ENCODE measurements at regions of chr14 and their contacts with region 1.

Region 1: DNA sequence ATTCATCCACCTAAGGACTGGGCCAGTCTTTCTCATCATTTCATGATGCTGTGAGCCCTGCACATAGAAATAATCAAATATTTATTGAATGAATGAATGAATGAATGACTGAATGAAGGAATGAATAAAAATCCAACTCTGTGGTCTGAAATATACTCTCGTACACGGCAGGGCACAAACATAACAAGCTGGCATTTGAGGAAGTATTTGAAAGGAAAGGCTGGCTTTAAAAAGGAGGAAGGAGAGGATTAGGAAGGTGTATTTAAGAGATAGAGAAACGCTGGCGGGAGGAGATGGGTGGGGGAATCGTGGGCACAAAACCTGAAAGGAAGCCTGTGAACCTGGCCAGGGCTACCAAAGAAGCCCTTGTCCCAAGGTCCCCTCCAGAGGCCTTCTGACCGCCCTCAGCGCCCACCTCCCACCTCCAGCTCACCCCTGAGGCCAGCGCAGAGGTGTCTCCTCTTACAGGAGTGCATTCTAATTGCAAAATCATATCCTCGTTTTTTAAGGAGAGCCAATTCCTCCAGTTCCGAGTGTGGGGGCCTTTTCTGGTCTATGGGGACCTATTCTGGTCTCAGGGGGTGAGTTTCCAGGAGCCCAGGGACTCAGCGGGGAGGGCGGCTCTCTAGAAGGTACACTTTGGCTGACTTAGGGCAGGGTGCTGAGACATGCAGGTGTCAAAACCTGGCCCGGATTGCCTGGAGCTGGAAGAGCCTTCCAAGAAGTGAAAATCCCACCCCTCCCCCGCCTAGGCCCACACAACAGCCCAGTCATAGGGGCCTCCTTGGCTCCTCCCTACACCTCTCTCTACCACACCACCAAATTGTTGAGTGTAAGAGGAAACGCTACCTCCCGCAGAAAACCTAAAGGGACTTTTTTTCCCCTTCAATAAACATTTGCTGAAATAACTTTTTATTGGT is 8.7 kb upstream of the JDP2 start:
- DNase-seq: no peak
- H3K4me3 ChIP-seq: no peak overlapping the region
- H3K27ac ChIP-seq: peak overlapping the region in 1 of 2 donors; percentile 9
- H3K4me1 ChIP-seq: no peaks in the 10 kb centered on the region
- H3K27me3 ChIP-seq: no peaks in the 10 kb centered on the region
- CTCF ChIP-seq: no peak
- POLR2A ChIP-seq: no peak

Region 2: GRCh38 chr14:73610687-73611086 is 1808.4 kb before region 1 on chr14:
- intact Hi-C with region 1: no loop called
- DNase-seq: no peak
- H3K4me3 ChIP-seq: no peak overlapping the region
- H3K27ac ChIP-seq: no peak overlapping the region
- H3K4me1 ChIP-seq: no peaks in the 10 kb centered on the region
- H3K27me3 ChIP-seq: no peaks in the 10 kb centered on the region
- CTCF ChIP-seq: no peak
- POLR2A ChIP-seq: no peak

Region 3: GRCh38 chr14:75366963-75367362 is 52.1 kb before region 1 on chr14:
- intact Hi-C with region 1: loop called (anchors 2 kb)
- DNase-seq: no peak
- H3K4me3 ChIP-seq: no peak overlapping the region
- H3K27ac ChIP-seq: no peak overlapping the region
- H3K4me1 ChIP-seq: peaks cover 0 to under 1% of the 10 kb centered on the region in 2 donors
- H3K27me3 ChIP-seq: no peaks in the 10 kb centered on the region
- CTCF ChIP-seq: no peak
- POLR2A ChIP-seq: no peak

Region 4: DNA sequence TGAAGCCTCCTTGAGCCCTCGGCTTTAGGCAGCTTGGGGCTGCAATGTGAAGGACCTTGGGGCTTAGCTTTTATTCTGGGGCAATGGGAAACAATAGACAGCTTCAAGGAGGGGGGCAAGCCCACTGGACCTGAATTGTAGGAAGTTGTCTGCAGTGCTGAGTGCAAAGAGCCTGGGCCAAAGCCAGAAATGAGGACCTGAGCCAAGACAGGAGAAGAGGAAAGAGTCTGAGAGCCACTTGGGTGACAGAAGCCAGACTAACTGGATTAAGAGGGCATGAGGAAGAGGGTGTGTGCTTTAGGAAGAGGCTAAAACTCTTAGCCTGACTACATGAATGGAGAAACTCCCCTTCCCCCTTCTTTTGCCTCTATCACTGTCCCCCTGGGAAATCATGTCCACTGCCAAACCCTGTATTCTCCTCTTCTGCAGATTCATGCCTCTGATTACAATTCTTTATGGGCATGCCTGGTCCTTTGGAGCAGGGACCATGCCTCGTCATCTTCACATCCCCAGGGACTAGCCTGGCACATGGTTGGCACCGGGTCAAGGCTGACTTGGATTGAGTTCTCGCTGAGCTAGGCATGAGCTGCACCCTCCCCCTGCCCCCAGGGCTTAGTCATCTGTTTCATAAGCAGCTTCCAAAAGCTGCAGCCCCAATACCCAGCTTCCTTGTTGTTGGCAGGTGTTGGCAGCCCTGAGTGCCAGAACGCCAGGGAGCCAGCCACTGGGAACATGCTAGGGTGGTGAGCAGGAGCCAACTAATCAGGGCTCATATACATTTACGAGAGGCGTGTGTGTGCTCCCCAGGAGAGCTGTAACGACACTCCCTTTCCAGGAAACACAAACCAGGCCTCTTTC is 19.1 kb before region 1 on chr14:
- intact Hi-C with region 1: loop called (anchors 2 kb)
- DNase-seq: peak; percentile 94 to 97
- H3K4me3 ChIP-seq: no peak overlapping the region
- H3K27ac ChIP-seq: peak overlapping the region; percentile 71 to 81
- H3K4me1 ChIP-seq: peaks cover 5% of the 10 kb centered on the region in 2 donors
- H3K27me3 ChIP-seq: no peaks in the 10 kb centered on the region
- CTCF ChIP-seq: no peak
- POLR2A ChIP-seq: no peak